Natural killer cell (primary cell): ENCODE measurements at regions of chr5 and their contacts with region 1.

Region 1: GRCh38 chr5:143008809-143009521 is 238.8 kb downstream of the ARHGAP26 start:
- DNase-seq: peak; percentile 71 to 95
- ATAC-seq: peak; percentile 88 to 95 (median 88)
- H3K4me3 ChIP-seq: no peak overlapping the region
- H3K4me3 Mint-ChIP-seq: peak overlapping the region; percentile 69
- H3K27ac ChIP-seq: peak overlapping the region; percentile 94
- H3K27ac Mint-ChIP-seq: peak overlapping the region; percentile 96 to 100
- H3K4me1 ChIP-seq: peaks cover 46% of the 10 kb centered on the region
- H3K4me1 Mint-ChIP-seq: peaks cover 58 to 63% of the 10 kb centered on the region in 2 donors
- H3K27me3 ChIP-seq: no peaks in the 10 kb centered on the region
- H3K27me3 Mint-ChIP-seq: no peaks in the 10 kb centered on the region
- CTCF ChIP-seq: peak; percentile 40

Region 2: DNA sequence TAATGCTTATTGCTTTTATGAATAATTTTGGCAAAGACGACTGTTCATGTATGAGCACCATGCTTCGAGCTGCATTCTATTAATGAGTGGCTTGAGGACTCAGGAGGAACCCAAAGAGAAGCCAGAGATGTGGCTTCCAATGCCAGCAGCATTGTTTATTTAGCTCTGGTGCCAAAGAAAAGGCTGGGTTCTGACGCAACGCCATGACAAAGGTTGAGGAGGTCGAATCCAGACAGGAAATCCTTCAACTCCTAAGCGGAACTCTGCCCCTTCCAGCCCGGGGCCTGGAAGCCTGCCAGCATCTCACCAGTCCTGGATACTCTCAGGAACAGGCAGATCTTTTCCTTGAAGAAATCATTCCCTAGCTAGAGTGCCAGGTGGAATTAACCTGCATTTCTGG is 134.4 kb before region 1 on chr5:
- intact Hi-C with region 1: no loop called
- DNase-seq: no peak
- ATAC-seq: no peak
- H3K4me3 ChIP-seq: no peak overlapping the region
- H3K4me3 Mint-ChIP-seq: no peak overlapping the region
- H3K27ac ChIP-seq: no peak overlapping the region
- H3K27ac Mint-ChIP-seq: no peak overlapping the region
- H3K4me1 ChIP-seq: no peaks in the 10 kb centered on the region
- H3K4me1 Mint-ChIP-seq: peaks cover 28 to 34% of the 10 kb centered on the region in 2 donors
- H3K27me3 ChIP-seq: no peaks in the 10 kb centered on the region
- H3K27me3 Mint-ChIP-seq: no peaks in the 10 kb centered on the region
- CTCF ChIP-seq: no peak

Region 3: DNA sequence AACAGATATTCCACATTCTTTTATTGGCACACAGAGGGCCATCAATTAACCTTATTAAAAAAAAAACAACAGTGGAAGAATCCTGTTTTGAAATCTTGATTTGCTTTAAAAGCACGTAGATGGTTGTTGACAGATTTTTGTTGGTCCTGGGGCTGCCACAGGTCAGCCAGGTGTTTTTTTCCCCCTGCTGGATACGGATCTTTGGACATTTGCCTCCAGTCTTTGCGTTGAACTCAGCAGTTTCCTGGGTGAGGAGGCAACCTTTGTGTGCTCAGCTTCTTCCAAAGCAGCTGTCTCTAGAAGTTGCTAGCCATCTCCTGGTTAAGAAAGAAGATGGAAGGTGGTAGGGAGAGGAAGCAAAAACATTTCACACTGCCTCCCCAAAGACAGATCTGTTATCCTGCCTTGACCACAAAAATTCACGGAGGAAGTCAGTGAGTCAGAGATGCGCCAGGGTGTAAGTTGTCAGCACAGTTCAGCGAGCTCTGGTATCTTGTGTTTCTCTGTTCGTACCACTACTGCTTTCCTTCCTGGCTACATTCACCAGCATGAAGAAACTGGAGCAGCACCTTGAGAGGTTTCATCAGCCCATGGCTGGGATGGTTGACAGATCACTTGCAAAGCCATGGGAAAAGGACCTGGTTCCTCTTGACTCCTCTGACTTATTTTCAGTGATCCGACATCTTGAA is 31.5 kb before region 1 on chr5:
- intact Hi-C with region 1: loop called (anchors 1 kb)
- DNase-seq: peak; percentile 63 to 87
- ATAC-seq: peak; percentile 83 to 96 (median 93)
- H3K4me3 ChIP-seq: no peak overlapping the region
- H3K4me3 Mint-ChIP-seq: peak overlapping the region; percentile 82
- H3K27ac ChIP-seq: peak overlapping the region; percentile 93
- H3K27ac Mint-ChIP-seq: peak overlapping the region; percentile 89 to 91
- H3K4me1 ChIP-seq: peaks cover 78% of the 10 kb centered on the region
- H3K4me1 Mint-ChIP-seq: peaks cover 97 to 98% of the 10 kb centered on the region in 2 donors
- H3K27me3 ChIP-seq: no peaks in the 10 kb centered on the region
- H3K27me3 Mint-ChIP-seq: no peaks in the 10 kb centered on the region
- CTCF ChIP-seq: no peak

Region 4: GRCh38 chr5:143051244-143052058 is 42.5 kb after region 1 on chr5:
- intact Hi-C with region 1: no loop called
- DNase-seq: no peak
- ATAC-seq: peak in 1 of 3 donors; percentile 22
- H3K4me3 ChIP-seq: no peak overlapping the region
- H3K4me3 Mint-ChIP-seq: no peak overlapping the region
- H3K27ac ChIP-seq: no peak overlapping the region
- H3K27ac Mint-ChIP-seq: peak overlapping the region in 1 of 2 donors; percentile 7
- H3K4me1 ChIP-seq: peaks cover 8% of the 10 kb centered on the region
- H3K4me1 Mint-ChIP-seq: peaks cover 51 to 54% of the 10 kb centered on the region in 2 donors
- H3K27me3 ChIP-seq: no peaks in the 10 kb centered on the region
- H3K27me3 Mint-ChIP-seq: no peaks in the 10 kb centered on the region
- CTCF ChIP-seq: no peak

Region 5: GRCh38 chr5:143222287-143223231 is 213.6 kb after region 1 on chr5:
- intact Hi-C with region 1: loop called (anchors 2 kb)
- DNase-seq: peak; percentile 60 to 89
- ATAC-seq: peak; percentile 77 to 80 (median 80)
- H3K4me3 ChIP-seq: no peak overlapping the region
- H3K4me3 Mint-ChIP-seq: peak overlapping the region; percentile 70
- H3K27ac ChIP-seq: peak overlapping the region; percentile 86
- H3K27ac Mint-ChIP-seq: peak overlapping the region; percentile 92 to 95
- H3K4me1 ChIP-seq: peaks cover 30% of the 10 kb centered on the region
- H3K4me1 Mint-ChIP-seq: peaks cover 69 to 70% of the 10 kb centered on the region in 2 donors
- H3K27me3 ChIP-seq: no peaks in the 10 kb centered on the region
- H3K27me3 Mint-ChIP-seq: no peaks in the 10 kb centered on the region
- CTCF ChIP-seq: no peak